ENCODE measurements at regions of chr20 and their contacts with region 1.

Region 1: DNA sequence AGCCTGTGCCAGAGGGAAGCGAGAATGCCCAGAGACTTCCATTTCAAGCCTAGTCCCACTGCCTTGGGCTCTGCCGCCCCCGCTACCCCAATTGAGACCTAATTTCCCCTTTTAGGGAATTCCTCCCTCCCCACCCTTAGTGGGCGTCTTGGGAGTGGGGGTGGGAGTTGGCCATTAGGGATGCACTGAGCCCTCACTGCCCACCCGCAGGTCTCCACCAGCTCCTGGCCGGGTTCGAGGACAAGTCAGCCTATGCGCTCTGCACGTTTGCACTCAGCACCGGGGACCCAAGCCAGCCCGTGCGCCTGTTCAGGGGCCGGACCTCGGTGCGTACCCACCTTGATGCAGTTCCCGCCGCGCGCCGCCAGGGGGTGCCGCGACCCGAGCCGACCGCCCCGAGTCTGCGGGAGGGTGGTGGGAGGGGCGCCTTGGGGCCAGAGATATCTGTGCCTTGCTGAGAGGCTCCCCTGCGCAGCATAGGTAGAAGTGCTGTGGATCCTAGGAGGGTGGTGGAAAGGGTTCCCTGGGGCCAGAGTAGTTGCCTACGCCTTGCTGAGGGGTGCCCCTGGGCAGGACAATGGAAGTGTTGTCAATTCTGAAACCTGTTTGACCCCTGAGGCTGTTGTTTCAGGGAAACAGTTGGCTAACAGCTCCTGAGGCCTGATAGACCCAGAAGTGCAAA is 9.2 kb downstream of the ITPA start:
- DNase-seq: peak; percentile 91
- ATAC-seq: peak; percentile 64

Region 2: GRCh38 chr20:3276680-3277015 is 58.2 kb after region 1 on chr20:
- intact Hi-C with region 1: loop called (anchors 10 kb)
- DNase-seq: no peak
- ATAC-seq: no peak